ENCODE measurements at regions of chr18 and their contacts with region 1.

Region 1: DNA sequence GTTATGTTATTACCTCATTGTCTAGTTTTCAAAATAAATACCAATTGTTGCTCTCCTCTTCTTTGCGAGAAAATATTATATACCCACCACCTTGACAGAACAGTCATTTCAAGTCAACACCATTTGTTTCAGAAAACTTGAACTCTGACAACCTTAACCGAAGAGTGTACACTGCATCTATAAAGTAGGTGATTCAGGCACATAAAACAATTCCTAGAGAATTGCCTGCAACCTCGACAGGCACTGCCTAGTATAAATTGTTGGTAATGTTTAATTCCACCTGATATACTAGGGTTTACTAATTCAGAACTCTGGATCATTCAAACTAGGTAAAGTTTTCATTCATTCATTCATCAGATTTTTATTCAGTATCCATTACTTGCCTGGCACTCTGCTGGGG is 121.8 kb downstream of the AKAIN1 start:
- DNase-seq: no peak
- ATAC-seq: no peak

Region 2: DNA sequence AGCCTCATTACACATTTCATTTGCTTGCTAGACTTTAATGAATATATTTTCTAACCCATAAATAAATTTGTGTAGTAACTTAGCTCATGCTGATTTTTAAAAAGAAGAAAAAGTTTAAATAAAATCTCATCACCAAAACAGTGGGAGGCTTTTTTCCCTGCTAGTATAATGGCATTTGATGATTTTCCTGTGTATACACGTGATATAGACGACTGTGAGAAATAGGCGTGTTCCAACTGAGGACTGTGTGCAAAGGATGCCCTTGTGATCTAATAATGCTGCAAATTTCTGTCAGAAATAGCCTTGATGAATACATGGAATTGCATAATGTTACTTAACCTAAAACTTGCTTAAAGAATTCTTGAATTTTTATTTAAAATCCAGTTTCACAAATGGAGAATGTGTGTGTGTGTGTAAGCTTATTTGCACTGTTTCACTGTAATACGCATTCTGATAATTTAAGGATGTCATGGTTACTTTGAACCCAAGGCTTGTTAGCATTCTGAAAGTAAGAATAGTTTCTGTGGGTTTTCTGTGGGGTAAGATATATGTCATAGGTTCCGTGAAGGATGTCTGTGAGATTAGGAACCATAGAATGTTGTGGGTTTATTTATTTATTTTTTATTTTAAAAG is 798.2 kb before region 1 on chr18:
- intact Hi-C with region 1: no loop called
- DNase-seq: no peak
- ATAC-seq: no peak

Region 3: DNA sequence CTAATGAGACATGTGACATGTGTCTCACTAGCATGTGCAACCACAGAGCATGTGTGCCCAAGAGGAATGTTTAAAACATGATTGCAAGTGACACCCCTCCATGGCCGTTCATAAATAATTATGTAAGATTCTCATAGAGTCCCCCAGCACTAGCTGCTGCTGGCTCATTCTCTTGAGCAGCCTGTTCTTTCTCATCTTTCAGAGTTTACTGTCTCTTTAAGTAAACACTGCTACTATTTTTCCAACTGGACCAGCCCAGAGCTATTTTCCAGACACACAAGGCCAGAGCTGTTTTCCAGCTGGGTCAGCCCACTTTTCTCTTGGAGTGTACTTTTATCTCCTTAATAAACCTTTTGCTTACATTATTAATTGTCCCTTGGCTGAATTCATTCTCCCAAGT is 293.4 kb before region 1 on chr18:
- intact Hi-C with region 1: no loop called
- DNase-seq: no peak
- ATAC-seq: no peak

Region 4: DNA sequence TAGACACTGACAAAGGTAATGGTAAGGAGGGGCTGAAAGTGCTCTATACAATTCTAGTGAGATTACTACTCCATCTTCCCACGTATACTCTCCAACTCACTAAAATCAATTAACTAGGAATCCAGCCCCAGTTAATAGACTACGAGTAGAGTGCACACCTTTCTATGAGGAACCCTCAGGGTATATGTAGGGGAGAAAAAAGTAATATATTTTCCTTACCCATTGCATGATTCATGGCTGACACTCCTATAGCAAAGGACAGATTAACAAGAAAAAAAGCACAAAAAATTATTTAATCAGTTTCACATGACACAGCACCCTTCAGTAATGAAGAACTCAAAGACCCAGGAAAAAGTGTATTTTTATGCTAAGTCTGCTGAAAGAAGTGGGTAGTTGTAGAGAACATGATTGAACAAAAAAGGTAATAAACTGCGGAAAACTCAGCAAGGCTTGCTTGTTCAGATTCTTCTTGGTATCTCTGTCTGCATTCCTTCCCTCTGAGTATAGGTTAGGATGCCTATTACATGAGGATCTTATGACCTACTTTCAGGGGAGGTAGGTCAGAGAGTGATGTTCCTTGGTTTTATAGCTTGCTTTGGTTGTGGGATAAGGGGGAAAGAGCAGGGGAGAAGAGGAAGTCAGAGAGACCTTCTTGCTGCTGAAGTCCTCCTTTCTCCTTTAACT is 278.2 kb before region 1 on chr18:
- intact Hi-C with region 1: no loop called
- DNase-seq: no peak
- ATAC-seq: no peak

Region 5: GRCh38 chr18:5106730-5107129 is 31.4 kb after region 1 on chr18:
- intact Hi-C with region 1: loop called (anchors 1 kb)
- DNase-seq: no peak
- ATAC-seq: no peak

Region 6: DNA sequence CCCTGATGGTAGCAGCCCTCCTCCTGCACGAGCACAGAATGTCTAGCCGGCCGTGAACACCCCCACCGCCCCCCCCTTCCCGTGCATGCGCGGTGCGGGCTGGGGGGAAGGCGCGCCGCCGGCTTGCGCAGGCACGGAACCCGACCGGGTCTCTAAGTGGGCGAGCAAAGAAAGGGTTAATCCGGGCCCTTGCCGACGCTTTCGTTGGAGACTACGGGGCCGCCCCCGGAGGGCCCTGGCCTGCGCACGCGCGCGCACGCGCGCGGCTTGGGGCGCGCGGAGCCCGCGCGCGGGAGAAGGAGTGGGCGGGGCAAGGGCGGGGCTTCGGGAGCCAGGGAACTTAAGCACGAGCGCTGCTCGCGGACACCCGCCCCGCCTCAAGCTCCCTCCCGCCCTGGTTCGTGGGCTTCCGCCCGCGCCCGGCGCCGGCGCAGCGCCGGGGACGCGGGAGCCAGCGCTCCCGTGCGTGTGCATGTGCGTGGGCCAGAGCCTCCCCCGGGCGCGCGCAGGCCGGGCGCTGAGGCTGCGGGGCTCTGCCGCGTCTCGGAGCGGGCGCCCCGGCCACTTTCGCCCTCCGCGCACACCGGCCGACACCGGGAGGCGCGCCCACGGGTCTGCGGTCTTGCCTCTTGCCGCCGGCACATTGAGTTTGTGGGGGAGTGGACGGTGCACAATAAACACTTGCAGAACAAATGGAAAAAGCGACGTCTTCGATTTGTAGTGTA is 220.8 kb after region 1 on chr18:
- intact Hi-C with region 1: no loop called
- DNase-seq: peak; percentile 98
- ATAC-seq: peak; percentile 86